ENCODE measurements at regions of chr20 and their contacts with region 1.

Region 1: DNA sequence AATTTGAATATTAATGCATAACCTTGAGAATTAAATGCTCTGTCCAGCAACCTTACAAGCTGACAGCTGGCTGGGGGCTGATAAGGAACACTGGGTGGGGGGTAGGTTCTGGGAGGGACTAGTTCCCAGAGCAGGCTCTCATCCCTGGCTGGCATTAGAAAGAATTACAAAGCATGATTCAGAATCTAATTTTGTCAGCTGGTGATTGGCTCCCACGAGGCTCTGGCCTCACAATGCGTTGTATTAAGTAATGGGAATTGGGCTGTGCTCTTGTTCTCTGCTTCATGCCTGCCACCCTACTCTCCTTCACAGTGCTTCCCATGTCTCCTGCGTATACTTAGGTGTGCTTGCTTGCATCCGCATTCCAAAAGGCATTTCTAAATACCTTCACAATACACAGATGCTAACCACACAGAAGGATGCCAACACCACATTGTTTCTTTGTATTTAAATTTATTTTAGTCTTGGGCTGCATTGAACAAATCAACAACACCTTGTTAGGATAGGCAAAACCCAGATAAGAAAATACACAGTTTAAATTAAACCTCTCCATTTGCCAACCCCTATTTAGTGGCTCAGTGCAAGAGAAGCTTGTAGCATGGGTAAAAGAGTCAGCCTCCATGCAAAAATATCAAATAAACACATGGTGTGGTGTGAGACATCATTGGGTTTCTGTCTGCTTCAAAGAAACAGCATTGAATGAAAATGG is 434.5 kb upstream of the JAG1 start:
- DNase-seq: peak; percentile 8 to 25
- ATAC-seq: peak; percentile 97 to 98
- H3K4me3 ChIP-seq: no peak overlapping the region
- H3K27ac ChIP-seq: peak overlapping the region in 2 of 4 donors; percentile 2 to 45
- H3K4me1 ChIP-seq: peaks cover 6 to 11% of the 10 kb centered on the region in 2 donors
- H3K27me3 ChIP-seq: no peaks in the 10 kb centered on the region
- CTCF ChIP-seq: no peak
- POLR2A ChIP-seq: no peak

Region 2: DNA sequence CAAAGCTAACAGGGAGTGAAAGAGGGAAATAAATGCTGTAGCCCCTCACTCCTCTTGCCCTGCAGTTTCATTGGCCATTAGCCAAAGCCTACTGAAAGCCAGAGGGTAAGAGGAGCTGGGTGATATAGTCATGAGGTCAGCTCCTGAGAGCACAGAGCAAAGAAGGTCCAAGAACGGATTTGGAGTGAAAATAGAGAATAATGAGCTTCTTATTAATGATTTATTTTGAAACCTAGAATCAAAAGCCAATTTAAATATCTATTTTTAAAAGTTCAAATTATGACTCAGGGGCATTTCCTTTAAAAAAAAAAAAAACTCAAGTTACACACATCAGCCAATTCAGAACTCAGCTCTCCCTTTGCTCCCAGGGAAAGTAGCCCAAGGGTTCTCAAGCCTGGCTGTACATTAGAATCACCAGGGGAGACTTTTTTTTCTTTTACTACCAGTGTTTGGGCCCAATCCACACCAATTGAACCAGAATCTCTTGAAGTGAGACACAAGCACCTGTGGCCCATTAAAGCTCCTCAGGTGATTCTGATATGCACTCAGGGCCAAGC is 810.5 kb before region 1 on chr20:
- in situ Hi-C with region 1: no loop called
- intact Hi-C with region 1: no loop called
- DNase-seq: no peak
- ATAC-seq: no peak
- H3K4me3 ChIP-seq: no peak overlapping the region
- H3K27ac ChIP-seq: no peak overlapping the region
- H3K4me1 ChIP-seq: no peaks in the 10 kb centered on the region
- H3K27me3 ChIP-seq: no peaks in the 10 kb centered on the region
- CTCF ChIP-seq: no peak
- POLR2A ChIP-seq: no peak

Region 3: DNA sequence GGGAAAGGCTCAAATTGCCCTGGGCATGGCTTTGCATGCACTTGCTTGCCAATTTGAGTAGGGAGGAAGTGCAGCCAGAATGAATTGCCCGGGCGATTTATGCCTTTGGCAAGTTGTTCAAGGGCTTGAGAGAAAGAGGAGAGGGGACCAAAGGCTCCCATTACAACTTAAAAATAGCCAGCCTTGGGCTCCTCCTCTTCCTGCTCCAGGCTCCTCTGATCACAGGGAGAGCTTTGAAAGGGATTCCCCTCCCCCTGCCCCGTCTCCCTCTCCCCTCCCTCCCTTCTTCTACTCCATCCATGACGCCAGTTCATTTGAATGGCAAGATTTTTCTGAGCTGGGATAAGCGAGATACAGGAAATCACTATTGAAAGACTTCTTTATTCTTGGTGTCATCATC is 129.5 kb before region 1 on chr20:
- in situ Hi-C with region 1: no loop called
- intact Hi-C with region 1: loop called (anchors 5 kb)
- DNase-seq: peak; percentile 69 to 87
- ATAC-seq: peak; percentile 89
- H3K4me3 ChIP-seq: peak overlapping the region in 2 of 4 donors; percentile 3 to 26
- H3K27ac ChIP-seq: peak overlapping the region; percentile 78 to 89 (median 87)
- H3K4me1 ChIP-seq: peaks cover 41 to 53% of the 10 kb centered on the region in 2 donors
- H3K27me3 ChIP-seq: no peaks in the 10 kb centered on the region
- CTCF ChIP-seq: no peak
- POLR2A ChIP-seq: no peak

Region 4: DNA sequence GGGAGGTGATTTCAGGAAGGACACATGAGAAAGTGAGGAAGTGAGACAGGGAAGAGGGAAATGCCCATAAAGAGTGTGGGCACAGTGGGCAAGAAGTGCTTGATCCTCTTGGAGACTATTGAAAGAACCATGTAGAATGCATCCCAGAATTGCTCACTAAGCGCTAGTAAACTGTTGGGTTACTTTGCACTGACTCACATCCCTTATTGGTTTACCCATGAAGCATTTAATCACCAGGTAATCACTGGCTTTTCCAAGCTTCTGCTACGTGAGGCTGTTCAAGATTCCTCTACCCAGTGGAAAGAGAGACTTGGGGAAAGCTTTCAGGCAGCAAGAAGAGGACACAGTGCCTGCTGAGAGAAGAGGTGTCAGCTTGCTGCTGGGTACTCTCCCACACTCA is 24.4 kb before region 1 on chr20:
- in situ Hi-C with region 1: no loop called
- intact Hi-C with region 1: loop called (anchors 2 kb)
- DNase-seq: no peak
- ATAC-seq: no peak
- H3K4me3 ChIP-seq: no peak overlapping the region
- H3K27ac ChIP-seq: no peak overlapping the region
- H3K4me1 ChIP-seq: no peaks in the 10 kb centered on the region
- H3K27me3 ChIP-seq: no peaks in the 10 kb centered on the region
- CTCF ChIP-seq: no peak
- POLR2A ChIP-seq: no peak

Region 5: DNA sequence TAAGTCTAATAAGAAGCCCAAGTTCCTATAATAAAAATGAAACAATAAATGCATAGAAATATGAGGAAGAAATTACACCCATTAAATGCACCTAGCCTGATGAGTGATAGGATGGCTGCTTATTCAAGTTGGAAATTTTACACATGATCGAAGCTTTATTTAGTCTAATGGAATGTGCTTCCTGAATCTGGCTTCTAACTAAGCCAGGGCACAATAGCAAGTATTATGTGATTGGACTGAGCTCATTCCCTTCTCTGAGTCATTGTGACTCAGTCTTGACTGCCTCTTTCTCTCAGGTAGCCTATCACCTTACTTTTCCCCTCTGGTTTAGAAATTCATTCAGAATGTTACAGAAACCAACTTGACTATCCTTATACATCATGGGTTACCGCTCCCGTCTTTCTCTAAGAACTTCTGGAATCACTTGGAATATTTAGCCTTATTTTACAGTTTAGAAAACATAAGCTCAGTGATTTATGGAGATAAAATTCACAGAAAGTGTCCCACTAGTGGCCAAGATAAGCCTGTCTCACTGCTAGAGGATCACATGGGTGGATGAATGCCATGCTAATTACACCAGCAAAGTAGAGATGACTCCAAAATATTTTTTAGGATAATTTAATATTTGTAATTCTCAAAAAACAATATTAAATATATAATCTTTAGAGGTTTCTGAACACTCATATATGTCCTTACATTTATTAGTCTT is 70.8 kb after region 1 on chr20:
- in situ Hi-C with region 1: no loop called
- intact Hi-C with region 1: no loop called
- DNase-seq: no peak
- ATAC-seq: no peak
- H3K4me3 ChIP-seq: no peak overlapping the region
- H3K27ac ChIP-seq: peak overlapping the region in 1 of 4 donors; percentile 27
- H3K4me1 ChIP-seq: peaks cover 0 to 8% of the 10 kb centered on the region in 2 donors
- H3K27me3 ChIP-seq: no peaks in the 10 kb centered on the region
- CTCF ChIP-seq: no peak
- POLR2A ChIP-seq: no peak

Measured in gastrocnemius medialis (tissue), 4 donors.